Pancreas (tissue), 10 donors: ENCODE measurements at regions of chr9 and their contacts with region 1.

Region 1: DNA sequence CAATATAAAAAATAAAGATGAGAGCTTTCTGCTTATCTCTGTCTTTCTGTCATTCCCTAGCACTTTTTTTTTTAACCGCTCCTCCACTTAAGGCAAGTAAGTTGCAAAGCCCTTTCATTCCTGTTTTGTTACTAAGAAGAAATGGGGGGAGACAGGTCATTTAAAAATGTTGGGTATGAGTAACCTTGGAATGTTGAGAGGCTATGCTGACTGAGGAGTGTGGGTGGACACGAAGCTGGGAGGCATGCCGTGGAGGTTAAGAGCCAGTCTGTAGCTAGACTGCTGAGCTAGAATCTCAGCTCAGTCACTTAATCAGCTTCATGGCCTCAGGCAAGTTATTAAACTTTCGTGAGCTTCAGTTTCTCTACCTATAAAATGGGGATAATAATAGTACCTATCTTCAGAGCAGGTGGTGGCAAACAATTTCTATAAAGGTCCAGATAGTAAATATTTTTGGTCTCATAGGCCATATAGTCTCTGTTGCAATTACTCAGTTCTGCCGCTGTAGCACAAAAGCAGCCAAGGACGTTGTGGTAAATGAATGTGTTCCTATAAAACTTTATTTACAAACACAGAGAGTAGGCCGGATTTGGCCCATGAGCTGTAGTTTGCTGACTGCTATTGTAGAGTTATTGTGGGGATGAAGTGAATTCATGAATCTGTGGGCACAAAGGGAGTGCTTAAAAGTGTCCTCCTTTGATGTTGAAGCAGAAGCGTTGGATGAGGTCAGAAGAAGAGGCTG is 220.0 kb downstream of the GABBR2 start:
- DNase-seq: no peak
- ATAC-seq: no peak
- H3K4me3 ChIP-seq: no peak overlapping the region
- H3K27ac ChIP-seq: no peak overlapping the region
- H3K4me1 ChIP-seq: no peaks in the 10 kb centered on the region
- H3K27me3 ChIP-seq: no peaks in the 10 kb centered on the region
- CTCF ChIP-seq: no peak

Region 2: DNA sequence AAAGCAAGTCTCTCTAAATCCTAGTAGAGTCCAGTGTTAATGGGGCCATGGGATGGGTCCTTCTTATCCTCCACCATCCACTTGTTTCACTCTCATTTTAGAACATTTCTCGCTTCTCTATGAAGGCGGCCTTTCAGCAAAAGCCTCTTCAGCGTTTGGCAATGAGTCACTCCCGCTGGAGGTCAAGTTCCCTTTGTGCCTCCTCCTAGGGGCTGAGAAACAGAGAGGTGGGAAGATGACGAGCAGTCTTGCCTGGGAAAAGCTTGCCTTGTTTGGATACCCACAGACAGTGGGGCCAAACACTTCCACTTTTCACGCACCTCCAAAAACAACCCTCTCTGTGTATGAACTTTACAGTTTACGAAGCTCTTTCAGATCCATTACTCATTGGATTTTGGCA is 51.2 kb after region 1 on chr9:
- intact Hi-C with region 1: loop called in 1 of 3 experiments (anchors 10 kb)
- DNase-seq: no peak
- ATAC-seq: no peak
- H3K4me3 ChIP-seq: no peak overlapping the region
- H3K27ac ChIP-seq: no peak overlapping the region
- H3K4me1 ChIP-seq: no peaks in the 10 kb centered on the region
- H3K27me3 ChIP-seq: no peaks in the 10 kb centered on the region
- CTCF ChIP-seq: no peak

Region 3: DNA sequence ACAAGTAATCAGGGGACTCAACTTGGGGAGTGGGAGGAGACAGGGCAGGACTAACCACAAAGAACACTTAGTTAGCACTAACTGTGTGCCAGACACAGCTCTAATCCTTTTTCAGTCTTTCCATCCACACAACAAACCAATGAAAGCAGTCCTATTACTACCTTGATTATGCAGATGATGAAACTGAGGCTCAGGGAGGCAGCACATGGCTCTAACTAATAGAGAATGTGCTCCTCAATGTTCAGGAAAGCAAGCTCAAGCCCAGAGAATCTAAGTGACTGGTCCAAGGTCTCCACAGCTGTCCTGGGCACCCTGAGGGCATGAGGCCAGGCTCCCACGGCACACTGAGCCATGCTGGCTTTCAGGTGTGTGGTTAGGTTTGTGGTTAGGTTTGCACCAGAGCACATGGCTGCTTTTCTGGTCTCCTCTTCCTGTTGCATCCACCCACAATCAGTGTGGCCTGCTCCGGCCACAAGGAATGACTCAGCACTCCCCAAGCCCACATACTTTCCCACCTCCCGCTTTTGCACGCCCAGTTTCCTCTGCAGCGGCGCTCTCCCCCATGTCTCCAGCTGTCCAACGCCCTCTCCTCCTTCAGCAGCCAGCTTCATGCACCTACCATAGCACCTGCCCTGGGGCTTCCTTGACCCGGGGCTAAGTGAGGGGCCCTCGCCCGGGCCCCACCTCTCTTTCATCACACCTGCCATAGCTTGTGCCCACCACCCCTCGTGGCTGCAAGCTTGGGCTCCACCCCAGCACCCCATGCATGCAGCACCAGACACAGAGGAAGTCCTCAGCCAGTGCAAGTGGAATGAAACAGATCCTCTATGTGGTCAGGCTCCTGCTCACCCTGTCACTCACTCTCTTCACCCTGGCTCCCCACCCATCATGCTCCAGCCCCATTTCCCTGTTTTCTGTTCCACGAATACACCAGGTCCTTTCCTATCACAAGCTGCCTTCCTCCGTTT is 86.9 kb after region 1 on chr9:
- intact Hi-C with region 1: no loop called
- DNase-seq: no peak
- ATAC-seq: no peak
- H3K4me3 ChIP-seq: no peak overlapping the region
- H3K27ac ChIP-seq: no peak overlapping the region
- H3K4me1 ChIP-seq: no peaks in the 10 kb centered on the region
- H3K27me3 ChIP-seq: no peaks in the 10 kb centered on the region
- CTCF ChIP-seq: no peak